ENCODE measurements at regions of chr16 and their contacts with region 1.

Region 1: GRCh38 chr16:68995011-68995504 is 110.4 kb upstream of the HAS3 start:
- DNase-seq: peak; percentile 80
- ATAC-seq: peak; percentile 87
- H3K4me3 ChIP-seq: no peak overlapping the region
- H3K27ac ChIP-seq: peak overlapping the region; percentile 68
- H3K4me1 ChIP-seq: peaks cover 43 to 86% of the 10 kb centered on the region in 2 experiments
- H3K27me3 ChIP-seq: no peaks in the 10 kb centered on the region
- CTCF ChIP-seq: peak; percentile 75 to 86 (median 78)
- POLR2A ChIP-seq: no peak
- RAD21 ChIP-seq: peak; percentile 91

Region 2: GRCh38 chr16:68902008-68902968 is 92.8 kb before region 1 on chr16:
- CTCF ChIA-PET with region 1: no interaction called
- POLR2A ChIA-PET with region 1: no interaction called
- RAD21 ChIA-PET with region 1: no interaction called
- intact Hi-C with region 1: loop called (anchors 5 kb)
- DNase-seq: peak; percentile 72
- ATAC-seq: peak; percentile 90
- H3K4me3 ChIP-seq: no peak overlapping the region
- H3K27ac ChIP-seq: no peak overlapping the region
- H3K4me1 ChIP-seq: peaks cover 0 to 13% of the 10 kb centered on the region in 2 experiments; a peak in 2 of 4 replicates
- H3K27me3 ChIP-seq: no peaks in the 10 kb centered on the region
- CTCF ChIP-seq: peak; percentile 85 to 92 (median 90)
- POLR2A ChIP-seq: no peak
- RAD21 ChIP-seq: peak; percentile 98